Activated CD4-positive, alpha-beta memory T cell treated with anti-CD3 and anti-CD28 coated beads for 36 hours (primary cell): ENCODE measurements at regions of chr6 and their contacts with region 1.

Region 1: GRCh38 chr6:104789770-104790190 is 69.9 kb downstream of the HACE1 start:
- DNase-seq: peak; percentile 16
- H3K4me3 Mint-ChIP-seq: peak overlapping the region; percentile 50
- H3K27ac Mint-ChIP-seq: peak overlapping the region; percentile 85
- H3K4me1 Mint-ChIP-seq: peaks cover 25% of the 10 kb centered on the region
- H3K27me3 Mint-ChIP-seq: no peaks in the 10 kb centered on the region

Region 2: DNA sequence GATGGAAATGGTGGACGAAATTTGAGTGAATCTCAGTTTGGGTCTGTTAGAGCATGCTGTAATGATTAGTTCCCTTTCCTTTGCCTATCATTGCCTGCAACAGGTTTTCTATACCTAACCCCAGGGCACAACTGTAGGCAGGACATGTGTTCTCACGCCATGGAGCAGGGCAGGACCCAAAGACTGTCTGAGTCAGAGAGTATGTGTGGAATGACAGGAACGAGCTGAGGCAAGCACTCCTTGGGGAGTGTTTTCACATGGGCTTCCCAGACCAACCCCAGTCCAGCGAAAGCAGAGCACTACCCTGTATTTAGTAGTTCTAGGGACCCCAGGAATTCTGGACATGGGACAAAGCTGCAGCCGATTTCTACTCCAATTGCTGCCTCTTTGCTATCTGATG is 164.2 kb before region 1 on chr6:
- CTCF ChIA-PET with region 1: no interaction called
- POLR2A ChIA-PET with region 1: no interaction called
- intact Hi-C with region 1: no loop called
- DNase-seq: no peak
- H3K4me3 Mint-ChIP-seq: no peak overlapping the region
- H3K27ac Mint-ChIP-seq: no peak overlapping the region
- H3K4me1 Mint-ChIP-seq: peaks cover 7% of the 10 kb centered on the region
- H3K27me3 Mint-ChIP-seq: peaks cover 10% of the 10 kb centered on the region

Region 3: DNA sequence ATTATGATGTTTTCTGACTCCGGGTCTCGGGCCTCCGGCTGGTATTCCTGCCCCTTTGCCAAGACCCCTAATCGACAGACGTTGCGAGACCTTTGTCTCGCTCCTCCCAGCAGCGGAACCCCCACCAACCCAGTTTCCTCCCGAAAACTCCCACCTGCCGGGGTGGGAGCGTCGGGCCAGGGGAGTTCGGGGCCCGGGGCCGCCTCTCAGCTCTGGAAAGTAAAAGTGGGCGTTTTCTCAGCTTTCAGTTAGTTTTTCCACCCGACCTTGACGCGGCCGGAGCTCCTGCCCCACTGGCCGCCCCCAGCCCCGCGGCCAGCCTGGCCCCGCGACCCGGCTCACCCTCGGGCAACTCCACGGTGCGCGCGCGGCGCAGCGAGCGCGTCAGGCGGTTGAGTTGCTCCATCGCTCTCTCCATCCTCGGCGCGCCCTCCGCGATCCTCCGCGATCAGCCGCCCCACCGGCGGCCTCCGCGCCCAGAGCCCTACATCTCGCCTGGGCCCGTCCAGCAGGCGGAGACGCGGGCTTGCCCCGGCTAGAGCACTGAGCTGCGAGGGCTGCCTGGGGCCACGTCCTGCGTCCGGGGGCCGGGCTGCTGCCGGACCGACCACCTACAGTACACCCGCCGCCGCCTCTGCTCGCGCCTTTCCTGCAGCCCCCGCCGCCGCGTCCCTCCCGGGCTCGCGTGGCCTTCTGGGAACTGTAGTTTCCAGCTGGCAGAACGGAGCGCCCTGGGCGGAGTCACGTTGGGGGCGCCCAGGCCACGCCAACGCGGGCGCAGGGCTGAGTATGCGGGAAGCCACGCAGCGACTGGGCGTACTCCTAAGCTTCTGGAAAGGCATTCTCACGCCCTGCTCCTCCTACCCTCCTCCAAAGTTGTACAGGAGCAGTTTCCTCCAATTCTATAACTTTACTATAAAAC is 69.7 kb after region 1 on chr6 and contains the start of gene HACE1:
- CTCF ChIA-PET with region 1: interaction called, 10 read pairs
- POLR2A ChIA-PET with region 1: no interaction called
- intact Hi-C with region 1: loop called (anchors 1 kb)
- DNase-seq: peak; percentile 92
- H3K4me3 Mint-ChIP-seq: peak within 1 kb of the TSS; percentile 93
- H3K27ac Mint-ChIP-seq: peak within 1 kb of the TSS; percentile 79
- H3K4me1 Mint-ChIP-seq: peaks cover 18% of the 10 kb centered on the region
- H3K27me3 Mint-ChIP-seq: peaks cover 2% of the 10 kb centered on the region
- total RNA-seq, gene HACE1: 15.0 to 17.6 TPM

Region 4: GRCh38 chr6:104940881-104941728 is 151.3 kb after region 1 on chr6:
- CTCF ChIA-PET with region 1: interaction called, 3 read pairs
- POLR2A ChIA-PET with region 1: no interaction called
- intact Hi-C with region 1: loop called (anchors 10 kb)
- DNase-seq: peak; percentile 46
- H3K4me3 Mint-ChIP-seq: peak overlapping the region; percentile 45
- H3K27ac Mint-ChIP-seq: no peak overlapping the region
- H3K4me1 Mint-ChIP-seq: peaks cover 5% of the 10 kb centered on the region
- H3K27me3 Mint-ChIP-seq: peaks cover 42% of the 10 kb centered on the region

Region 5: GRCh38 chr6:105077596-105078385 is 288.0 kb after region 1 on chr6:
- CTCF ChIA-PET with region 1: interaction called, 6 read pairs
- POLR2A ChIA-PET with region 1: no interaction called
- intact Hi-C with region 1: loop called (anchors 1 kb)
- DNase-seq: no peak
- H3K4me3 Mint-ChIP-seq: no peak overlapping the region
- H3K27ac Mint-ChIP-seq: no peak overlapping the region
- H3K4me1 Mint-ChIP-seq: no peaks in the 10 kb centered on the region
- H3K27me3 Mint-ChIP-seq: no peaks in the 10 kb centered on the region